ENCODE measurements at regions of chr2 and their contacts with region 1.

Region 1: DNA sequence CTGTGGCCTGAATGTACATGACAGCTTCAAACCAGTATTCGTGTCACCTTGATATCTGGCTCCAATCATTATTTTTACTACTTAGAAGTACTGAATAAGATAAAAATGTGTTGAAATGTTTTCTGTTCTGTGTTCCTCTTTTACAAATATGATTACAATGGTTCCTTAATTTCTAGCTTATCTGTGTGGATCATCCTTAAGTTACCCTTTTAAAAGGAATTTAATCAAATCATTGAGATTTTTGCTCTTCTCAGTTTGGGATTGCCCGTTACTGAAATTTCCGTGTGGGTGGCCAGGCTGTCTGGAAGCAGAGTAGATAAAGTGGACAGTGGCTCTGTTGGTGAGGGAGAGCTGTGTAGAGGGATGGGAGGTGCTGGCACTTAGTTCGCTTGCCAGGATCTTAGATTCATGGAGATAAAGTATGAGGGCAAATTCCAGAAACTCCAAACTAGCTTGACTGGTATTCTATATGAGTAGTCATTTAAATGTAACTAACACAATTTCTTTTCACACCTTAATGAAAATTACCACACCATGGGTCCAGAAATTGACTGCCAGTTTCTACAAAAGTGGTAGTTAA is 27.4 kb upstream of the SAG start:
- DNase-seq: no peak
- H3K4me3 ChIP-seq: no peak overlapping the region
- H3K27ac ChIP-seq: no peak overlapping the region
- H3K27me3 ChIP-seq: no peaks in the 10 kb centered on the region
- CTCF ChIP-seq: no peak

Region 2: DNA sequence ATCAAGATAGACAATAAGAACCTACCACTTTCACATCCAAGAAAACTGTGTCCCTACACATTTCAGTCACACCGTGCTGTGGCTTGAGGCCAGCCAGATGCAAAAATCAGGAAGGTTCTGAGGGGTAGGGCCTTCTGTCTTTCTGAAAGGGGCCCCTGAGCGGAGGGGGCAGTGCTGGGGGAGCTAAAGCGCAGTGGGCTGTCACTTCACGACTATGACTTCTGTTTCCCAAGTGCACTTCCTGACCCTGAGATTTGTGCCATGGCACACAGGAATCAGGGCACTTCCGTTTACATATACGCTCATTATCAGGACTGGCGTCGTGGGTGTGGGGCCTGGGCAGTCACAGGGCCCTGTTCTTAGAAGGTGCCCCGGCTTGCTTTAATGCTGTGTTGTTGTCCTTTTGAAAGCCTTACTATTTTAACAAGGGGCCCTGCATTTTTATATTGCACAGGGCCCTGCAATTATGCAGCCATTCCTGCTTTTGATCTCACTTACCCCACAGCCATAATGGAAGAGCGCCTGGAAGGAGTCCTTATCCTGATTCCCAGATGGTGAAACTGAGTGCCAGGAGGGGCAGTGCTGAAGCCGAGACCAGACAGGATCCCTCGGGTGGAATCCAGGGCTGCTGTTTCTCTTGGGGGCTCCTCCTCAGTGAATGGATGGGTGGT is 267.8 kb before region 1 on chr2:
- CTCF ChIA-PET with region 1: no interaction called
- POLR2A ChIA-PET with region 1: no interaction called
- DNase-seq: no peak
- H3K4me3 ChIP-seq: no peak overlapping the region
- H3K27ac ChIP-seq: no peak overlapping the region
- H3K27me3 ChIP-seq: peaks cover 13% of the 10 kb centered on the region
- CTCF ChIP-seq: no peak

Region 3: DNA sequence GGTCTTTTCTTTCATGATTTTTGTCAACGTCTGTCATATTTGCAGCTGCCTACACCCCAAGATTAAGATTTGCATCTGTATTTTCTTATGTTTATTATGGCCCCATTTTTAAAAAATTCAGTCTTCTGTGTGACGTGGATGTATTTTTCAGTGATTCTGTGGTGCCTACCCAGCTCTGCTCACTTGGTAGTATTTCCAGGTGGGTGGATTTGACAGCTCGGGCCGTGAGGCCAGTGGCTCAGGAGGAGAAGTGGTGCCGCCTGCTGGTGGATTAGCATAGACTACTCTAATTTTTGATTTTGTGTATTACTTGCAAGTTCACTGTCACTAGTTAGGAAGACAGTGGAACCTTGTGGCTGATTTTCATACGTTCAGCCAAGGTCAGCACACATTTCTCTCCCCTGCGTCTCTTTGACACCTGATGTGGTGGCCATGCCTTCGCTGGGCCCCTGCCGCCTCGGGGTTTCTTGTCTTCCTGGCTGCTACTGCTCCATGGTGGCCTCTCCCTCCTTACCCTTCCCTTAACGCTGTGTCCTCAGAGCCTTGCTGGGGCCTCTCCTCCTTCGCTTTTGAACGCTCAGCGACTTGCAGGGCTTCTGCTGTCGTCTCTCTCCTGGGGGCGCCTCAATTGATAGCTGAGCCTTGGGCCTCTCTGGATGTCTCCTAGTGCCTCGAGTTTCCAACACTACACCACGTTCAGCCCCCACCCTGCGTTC is 163.4 kb after region 1 on chr2:
- CTCF ChIA-PET with region 1: interaction called, 12 read pairs
- POLR2A ChIA-PET with region 1: no interaction called
- DNase-seq: peak; percentile 68
- H3K4me3 ChIP-seq: no peak overlapping the region
- H3K27ac ChIP-seq: no peak overlapping the region
- H3K27me3 ChIP-seq: no peaks in the 10 kb centered on the region
- CTCF ChIP-seq: peak; percentile 90